Heart left ventricle (tissue), 16 donors: ENCODE measurements at regions of chr1 and their contacts with region 1.

Region 1: GRCh38 chr1:108118018-108118902 is 81.9 kb downstream of the SLC25A24 start:
- DNase-seq: no peak
- ATAC-seq: peak in 3 of 4 donors; percentile 26 to 63 (median 61)
- H3K4me3 ChIP-seq: no peak overlapping the region
- H3K27ac ChIP-seq: peak overlapping the region in 1 of 12 donors; percentile 70
- H3K4me1 ChIP-seq: peaks cover 0 to 30% (median 8%) of the 10 kb centered on the region in 12 donors
- H3K27me3 ChIP-seq: no peaks in the 10 kb centered on the region
- CTCF ChIP-seq: no peak
- POLR2A ChIP-seq: no peak

Region 2: GRCh38 chr1:108057541-108057940 is 60.7 kb before region 1 on chr1:
- intact Hi-C with region 1: loop called in 1 of 10 experiments (anchors 10 kb)
- DNase-seq: peak in 4 of 5 donors; percentile 53 to 66 (median 57)
- ATAC-seq: peak in 3 of 4 donors; percentile 61 to 73 (median 65)
- H3K4me3 ChIP-seq: no peak overlapping the region
- H3K27ac ChIP-seq: peak overlapping the region in 2 of 12 donors; percentile 9 to 76
- H3K4me1 ChIP-seq: peaks cover 0 to 69% (median 2%) of the 10 kb centered on the region in 12 donors
- H3K27me3 ChIP-seq: no peaks in the 10 kb centered on the region
- CTCF ChIP-seq: no peak
- POLR2A ChIP-seq: no peak